Common myeloid progenitor, CD34-positive (primary cell): ENCODE measurements at regions of chr10 and their contacts with region 1.

Region 1: GRCh38 chr10:46006219-46006618 is 24.2 kb downstream of the NCOA4 start:
- DNase-seq: no peak
- H3K4me3 ChIP-seq: no peak overlapping the region
- H3K27ac ChIP-seq: peak overlapping the region in 1 of 2 experiments; percentile 53
- H3K4me1 ChIP-seq: peaks cover 0 to 9% (median 4%) of the 10 kb centered on the region in 4 experiments
- H3K27me3 ChIP-seq: no peaks in the 10 kb centered on the region

Region 2: DNA sequence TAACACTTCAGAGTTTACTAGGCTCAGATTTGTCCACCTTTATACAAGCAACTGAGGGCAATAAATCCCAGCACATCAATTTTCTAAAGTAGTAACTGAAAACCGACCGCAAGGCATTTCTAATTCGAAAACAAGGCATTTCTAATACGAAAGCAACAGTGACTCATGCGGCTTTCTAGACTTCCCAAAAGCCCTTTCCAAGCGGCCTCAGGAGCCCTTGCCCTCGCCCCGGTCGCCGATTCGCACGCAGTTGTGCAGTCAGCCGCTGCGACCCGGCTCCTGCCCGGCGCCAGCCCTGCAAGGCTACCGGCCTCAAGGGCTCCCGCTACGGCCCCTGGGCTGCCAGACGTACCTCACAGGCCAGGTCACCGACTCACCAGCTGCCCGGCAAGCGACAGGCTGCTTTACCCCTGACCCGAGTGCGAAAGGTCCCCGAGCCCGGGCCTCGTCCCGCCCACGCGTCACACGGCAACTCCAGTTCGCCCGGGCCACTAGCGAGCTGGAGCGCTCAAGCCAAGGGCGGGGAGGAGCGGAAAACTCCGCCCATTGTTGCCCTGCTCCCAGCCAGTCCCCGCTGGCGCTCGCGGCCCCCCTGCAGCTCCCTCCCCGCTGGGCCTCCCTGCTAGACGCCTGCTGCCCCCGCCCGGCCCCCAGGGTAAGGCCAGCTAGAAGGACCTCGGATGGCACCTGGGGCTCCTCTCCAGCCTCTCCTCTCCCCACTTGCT is 16.9 kb after region 1 on chr10:
- CTCF ChIA-PET with region 1: interaction called, 57 read pairs
- POLR2A ChIA-PET with region 1: interaction called, 10 read pairs
- DNase-seq: peak; percentile 90 to 94 (median 92)
- H3K4me3 ChIP-seq: peak overlapping the region; percentile 49 to 91 (median 77)
- H3K27ac ChIP-seq: peak overlapping the region; percentile 89 to 97
- H3K4me1 ChIP-seq: peaks cover 39 to 87% (median 74%) of the 10 kb centered on the region in 4 experiments
- H3K27me3 ChIP-seq: no peaks in the 10 kb centered on the region